Vagina (tissue), 2 donors: ENCODE measurements at regions of chr4 and their contacts with region 1.

Region 1: DNA sequence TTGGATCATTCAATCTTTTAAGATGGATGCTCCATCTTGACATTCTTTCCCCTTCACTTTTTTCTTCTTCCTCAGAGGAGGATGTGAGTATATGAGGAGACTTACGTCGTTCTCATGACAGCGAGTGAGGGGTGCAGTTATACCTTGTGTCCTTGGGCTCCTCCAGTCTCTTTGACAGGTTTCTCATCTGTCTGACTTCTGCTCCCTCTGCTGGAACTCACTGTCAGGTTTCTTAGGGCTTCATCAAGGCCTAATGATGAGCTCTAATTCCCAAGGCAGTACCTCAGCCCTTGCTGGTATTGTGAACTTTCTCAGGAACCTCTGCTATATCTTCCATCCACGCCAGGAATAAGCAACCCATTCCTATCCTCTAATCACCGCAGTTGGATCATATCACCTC is 237.8 kb upstream of the ADGRL3 start:
- DNase-seq: no peak
- H3K4me3 ChIP-seq: no peak overlapping the region
- H3K27ac ChIP-seq: no peak overlapping the region
- H3K4me1 ChIP-seq: no peaks in the 10 kb centered on the region
- H3K27me3 ChIP-seq: no peaks in the 10 kb centered on the region
- CTCF ChIP-seq: no peak
- POLR2A ChIP-seq: no peak

Region 2: GRCh38 chr4:61251129-61251528 is 288.8 kb after region 1 on chr4:
- intact Hi-C with region 1: no loop called
- DNase-seq: no peak
- H3K4me3 ChIP-seq: no peak overlapping the region
- H3K27ac ChIP-seq: no peak overlapping the region
- H3K4me1 ChIP-seq: no peaks in the 10 kb centered on the region
- H3K27me3 ChIP-seq: no peaks in the 10 kb centered on the region
- CTCF ChIP-seq: no peak
- POLR2A ChIP-seq: no peak

Region 3: DNA sequence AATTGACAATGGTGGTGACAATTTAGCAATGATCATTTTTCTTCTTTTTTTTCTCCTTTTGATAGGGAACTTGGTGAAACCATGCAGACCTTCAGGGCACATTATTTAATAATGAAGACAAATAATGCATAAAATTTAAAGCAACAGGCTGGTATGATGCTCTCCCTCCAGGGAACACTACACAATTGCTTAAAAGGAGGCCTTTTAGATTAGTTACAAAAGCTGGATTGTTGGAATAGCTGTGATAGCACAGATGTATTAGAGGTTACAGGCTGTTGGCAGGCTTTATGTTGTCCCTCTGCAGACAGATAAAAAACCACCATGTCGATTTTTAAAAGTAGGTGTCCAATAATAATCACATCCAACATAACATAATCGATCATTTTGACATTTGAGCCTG is 544.8 kb after region 1 on chr4:
- intact Hi-C with region 1: loop called (anchors 5 kb)
- DNase-seq: no peak
- H3K4me3 ChIP-seq: no peak overlapping the region
- H3K27ac ChIP-seq: no peak overlapping the region
- H3K4me1 ChIP-seq: no peaks in the 10 kb centered on the region
- H3K27me3 ChIP-seq: no peaks in the 10 kb centered on the region
- CTCF ChIP-seq: no peak
- POLR2A ChIP-seq: no peak

Region 4: GRCh38 chr4:62460329-62460728 is 1498.0 kb after region 1 on chr4:
- intact Hi-C with region 1: loop called (anchors 5 kb)
- DNase-seq: no peak
- H3K4me3 ChIP-seq: no peak overlapping the region
- H3K27ac ChIP-seq: no peak overlapping the region
- H3K4me1 ChIP-seq: no peaks in the 10 kb centered on the region
- H3K27me3 ChIP-seq: no peaks in the 10 kb centered on the region
- CTCF ChIP-seq: no peak
- POLR2A ChIP-seq: no peak